Calu3 (cell line): ENCODE measurements at regions of chr14 and their contacts with region 1.

Region 1: GRCh38 chr14:33432407-33433023 is 493.8 kb downstream of the NPAS3 start:
- DNase-seq: no peak
- H3K4me3 Mint-ChIP-seq: no peak overlapping the region
- H3K27ac Mint-ChIP-seq: no peak overlapping the region
- H3K4me1 Mint-ChIP-seq: no peaks in the 10 kb centered on the region
- H3K27me3 Mint-ChIP-seq: no peaks in the 10 kb centered on the region
- CTCF ChIP-seq: no peak

Region 2: GRCh38 chr14:32710731-32711680 is 721.5 kb before region 1 on chr14:
- CTCF ChIA-PET with region 1: no interaction called
- intact Hi-C with region 1: loop called (anchors 5 kb)
- DNase-seq: peak; percentile 32
- H3K4me3 Mint-ChIP-seq: no peak overlapping the region
- H3K27ac Mint-ChIP-seq: no peak overlapping the region
- H3K4me1 Mint-ChIP-seq: no peaks in the 10 kb centered on the region
- H3K27me3 Mint-ChIP-seq: peaks cover 28% of the 10 kb centered on the region
- CTCF ChIP-seq: peak; percentile 39

Region 3: DNA sequence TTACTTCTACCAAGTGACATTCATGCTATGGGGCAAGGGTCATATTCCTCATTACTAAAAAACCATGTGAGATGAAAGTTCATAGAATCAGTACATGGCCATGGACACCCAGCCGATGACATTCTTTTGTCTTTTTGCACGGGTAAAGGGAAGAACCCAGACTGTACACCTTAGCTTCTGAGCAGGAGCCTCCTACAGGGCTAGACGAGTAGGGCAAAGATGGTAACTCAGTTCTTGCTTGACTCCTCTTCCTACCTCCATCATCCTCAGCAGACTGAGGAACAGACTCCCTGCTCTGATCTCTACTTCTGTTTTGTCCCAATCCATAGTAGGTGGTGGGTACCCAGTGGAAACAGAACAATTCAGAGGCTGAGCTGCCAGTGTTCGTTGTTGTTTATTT is 212.6 kb before region 1 on chr14:
- CTCF ChIA-PET with region 1: no interaction called
- intact Hi-C with region 1: no loop called
- DNase-seq: no peak
- H3K4me3 Mint-ChIP-seq: no peak overlapping the region
- H3K27ac Mint-ChIP-seq: no peak overlapping the region
- H3K4me1 Mint-ChIP-seq: no peaks in the 10 kb centered on the region
- H3K27me3 Mint-ChIP-seq: peaks cover 27% of the 10 kb centered on the region
- CTCF ChIP-seq: no peak